ENCODE measurements at regions of chr15 and their contacts with region 1.

Region 1: GRCh38 chr15:62306851-62307504 is 141.9 kb upstream of the C2CD4B start:
- DNase-seq: peak; percentile 23
- H3K4me3 ChIP-seq: no peak overlapping the region
- H3K27ac ChIP-seq: no peak overlapping the region
- H3K27me3 ChIP-seq: peaks cover 3% of the 10 kb centered on the region
- CTCF ChIP-seq: peak; percentile 73

Region 2: DNA sequence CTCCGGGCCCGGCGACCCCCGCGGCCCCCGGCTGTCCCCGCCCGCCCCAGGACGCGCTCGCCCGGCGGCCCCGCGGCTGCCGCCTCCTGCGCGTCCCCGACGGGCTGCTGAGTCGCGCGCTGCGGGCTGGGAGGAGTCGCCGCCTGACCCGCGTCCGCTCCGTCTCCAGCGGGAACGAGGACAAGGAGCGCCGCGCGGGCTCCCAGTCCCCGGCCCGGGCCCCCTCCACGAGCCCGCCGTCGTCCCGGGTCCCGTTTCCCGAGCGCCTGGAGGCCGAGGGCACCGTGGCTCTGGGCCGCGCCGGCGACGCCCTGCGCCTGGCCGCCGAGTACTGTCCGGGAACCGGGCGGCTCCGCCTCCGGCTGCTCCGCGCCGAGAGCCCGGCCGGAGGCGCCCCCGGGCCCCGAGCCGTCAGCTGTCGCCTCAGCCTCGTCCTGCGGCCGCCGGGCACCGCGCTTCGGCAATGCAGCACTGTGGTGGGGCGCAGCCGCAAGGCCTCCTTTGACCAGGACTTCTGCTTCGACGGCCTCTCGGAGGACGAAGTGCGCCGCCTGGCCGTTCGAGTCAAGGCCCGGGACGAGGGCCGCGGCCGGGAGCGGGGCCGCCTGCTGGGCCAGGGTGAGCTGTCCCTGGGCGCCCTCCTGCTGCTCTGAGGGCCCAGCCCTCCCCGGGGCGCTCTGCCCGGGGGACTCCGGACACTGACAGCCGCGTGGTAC is 238.7 kb before region 1 on chr15:
- CTCF ChIA-PET with region 1: interaction called, 22 read pairs
- POLR2A ChIA-PET with region 1: no interaction called
- DNase-seq: no peak
- H3K4me3 ChIP-seq: peak overlapping the region; percentile 44; the same call in 1 of the 2 replicates
- H3K27ac ChIP-seq: no peak overlapping the region
- H3K27me3 ChIP-seq: peaks cover 25% of the 10 kb centered on the region
- CTCF ChIP-seq: peak; percentile 21; the same call in 1 of the 2 replicates

Region 3: GRCh38 chr15:62173215-62173614 is 133.8 kb before region 1 on chr15:
- CTCF ChIA-PET with region 1: no interaction called
- POLR2A ChIA-PET with region 1: no interaction called
- DNase-seq: no peak
- H3K4me3 ChIP-seq: no peak overlapping the region
- H3K27ac ChIP-seq: no peak overlapping the region
- H3K27me3 ChIP-seq: peaks cover 12% of the 10 kb centered on the region
- CTCF ChIP-seq: no peak

Region 4: GRCh38 chr15:62187910-62188309 is 119.1 kb before region 1 on chr15:
- CTCF ChIA-PET with region 1: no interaction called
- POLR2A ChIA-PET with region 1: no interaction called
- DNase-seq: no peak
- H3K4me3 ChIP-seq: no peak overlapping the region
- H3K27ac ChIP-seq: no peak overlapping the region
- H3K27me3 ChIP-seq: peaks cover 10% of the 10 kb centered on the region
- CTCF ChIP-seq: no peak

Region 5: DNA sequence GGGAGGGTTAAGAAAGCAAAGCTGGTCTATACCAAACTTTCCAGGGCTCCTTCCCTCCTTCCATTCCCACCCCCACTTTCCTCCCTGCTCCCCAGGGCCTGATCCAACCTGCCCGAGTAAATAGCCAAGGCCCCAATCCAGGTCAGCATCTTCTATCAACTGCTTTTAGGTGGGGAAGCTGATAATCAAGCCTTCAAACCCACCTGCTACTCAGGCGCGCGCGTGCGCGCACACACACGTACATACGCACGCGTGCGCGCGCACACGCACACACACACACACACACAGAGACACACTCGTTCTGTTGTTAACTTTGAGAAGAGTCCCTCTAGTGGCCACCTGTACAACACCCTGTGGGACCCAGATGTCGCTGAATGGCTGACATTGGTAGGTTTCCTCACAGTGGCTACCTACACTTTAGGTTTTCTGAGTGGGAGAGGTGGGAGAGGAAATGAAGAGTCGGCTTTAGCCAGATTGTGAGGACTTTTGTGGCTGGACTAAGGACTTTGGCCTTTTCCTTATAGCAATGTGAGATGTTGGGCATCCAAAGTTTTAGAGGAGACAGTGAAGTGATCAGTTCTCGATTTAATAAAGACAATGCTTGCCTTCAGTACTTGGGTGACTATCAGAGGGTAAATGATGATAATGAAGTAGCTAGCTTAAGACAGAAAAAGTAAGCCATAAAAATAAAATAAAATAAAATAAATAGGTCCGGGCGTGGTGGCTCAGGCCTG is 38.0 kb after region 1 on chr15:
- CTCF ChIA-PET with region 1: no interaction called
- POLR2A ChIA-PET with region 1: no interaction called
- DNase-seq: peak; percentile 8
- H3K4me3 ChIP-seq: no peak overlapping the region
- H3K27ac ChIP-seq: no peak overlapping the region
- H3K27me3 ChIP-seq: peaks cover 2% of the 10 kb centered on the region
- CTCF ChIP-seq: peak; percentile 66

Region 6: DNA sequence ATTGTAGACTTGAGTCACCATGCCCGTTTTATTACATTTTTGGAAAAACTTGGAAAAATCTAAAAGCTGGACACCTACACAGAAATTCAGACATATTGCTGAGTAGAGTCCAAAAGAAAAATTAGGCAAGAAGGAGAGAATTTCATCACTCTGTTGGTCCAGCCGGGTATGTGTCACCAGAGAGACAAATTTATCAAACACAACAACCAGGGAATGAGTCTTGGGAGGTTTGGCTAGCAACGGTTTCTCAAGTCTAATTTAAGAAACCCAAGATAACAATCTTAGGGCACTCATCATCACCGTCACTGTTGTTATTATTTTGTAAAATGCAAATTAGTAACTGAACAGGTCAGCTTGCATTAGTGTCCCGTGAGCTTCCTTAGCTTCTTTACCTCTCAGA is 55.6 kb after region 1 on chr15:
- CTCF ChIA-PET with region 1: no interaction called
- POLR2A ChIA-PET with region 1: no interaction called
- DNase-seq: no peak
- H3K4me3 ChIP-seq: no peak overlapping the region
- H3K27ac ChIP-seq: no peak overlapping the region
- H3K27me3 ChIP-seq: peaks cover 27% of the 10 kb centered on the region
- CTCF ChIP-seq: no peak

Measured in AG04450 (cell line).